Adrenal gland (tissue), 19 donors: ENCODE measurements at regions of chr14 and their contacts with region 1.

Region 1: DNA sequence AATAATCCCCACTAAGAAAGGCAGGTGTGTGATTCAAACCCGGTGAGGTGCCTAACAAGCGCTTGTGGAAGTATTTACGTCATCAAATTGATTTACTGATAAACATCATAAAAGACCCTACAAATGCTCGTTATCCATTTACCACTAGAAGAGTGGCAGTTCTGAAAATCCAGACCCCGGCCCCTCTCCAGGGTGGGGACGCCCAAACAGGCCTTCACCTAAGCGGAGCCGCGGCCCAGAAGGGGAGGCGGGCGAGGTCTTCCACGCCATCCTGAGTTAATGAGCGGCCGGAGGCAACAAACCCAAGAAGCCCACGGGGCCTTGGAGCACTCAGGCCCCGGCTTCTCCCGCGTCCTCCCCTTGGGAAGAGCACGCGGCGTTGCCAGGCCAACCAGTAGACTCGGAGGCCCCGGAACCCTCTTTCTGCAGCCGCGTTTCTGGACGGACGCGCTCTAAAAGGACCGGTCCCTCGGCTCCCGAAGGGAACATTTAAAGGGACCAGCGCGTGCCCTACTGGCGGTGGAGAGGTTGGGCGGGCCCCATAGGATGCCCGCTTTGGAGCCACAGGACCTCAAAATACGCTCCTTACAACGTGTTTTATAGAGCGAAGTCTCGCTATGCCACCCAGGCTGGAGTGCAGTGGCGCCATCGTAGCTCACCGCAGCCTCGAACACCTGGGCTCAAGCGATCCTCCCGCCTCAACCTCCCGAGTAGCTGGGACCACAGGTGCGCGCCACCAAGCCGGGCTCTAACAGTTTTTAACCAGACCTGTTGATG is 3.5 kb downstream of the PTPN21 start:
- DNase-seq: peak; percentile 83 to 92 (median 86)
- H3K4me3 ChIP-seq: peak overlapping the region; percentile 13 to 75 (median 58)
- H3K27ac ChIP-seq: peak overlapping the region in 2 of 5 donors; percentile 57 to 58
- H3K4me1 ChIP-seq: peaks cover 5 to 34% of the 10 kb centered on the region in 2 donors
- H3K27me3 ChIP-seq: no peaks in the 10 kb centered on the region
- CTCF ChIP-seq: peak in 5 of 6 experiments; percentile 31 to 54 (median 49)
- POLR2A ChIP-seq: peak; percentile 48 to 52

Region 2: DNA sequence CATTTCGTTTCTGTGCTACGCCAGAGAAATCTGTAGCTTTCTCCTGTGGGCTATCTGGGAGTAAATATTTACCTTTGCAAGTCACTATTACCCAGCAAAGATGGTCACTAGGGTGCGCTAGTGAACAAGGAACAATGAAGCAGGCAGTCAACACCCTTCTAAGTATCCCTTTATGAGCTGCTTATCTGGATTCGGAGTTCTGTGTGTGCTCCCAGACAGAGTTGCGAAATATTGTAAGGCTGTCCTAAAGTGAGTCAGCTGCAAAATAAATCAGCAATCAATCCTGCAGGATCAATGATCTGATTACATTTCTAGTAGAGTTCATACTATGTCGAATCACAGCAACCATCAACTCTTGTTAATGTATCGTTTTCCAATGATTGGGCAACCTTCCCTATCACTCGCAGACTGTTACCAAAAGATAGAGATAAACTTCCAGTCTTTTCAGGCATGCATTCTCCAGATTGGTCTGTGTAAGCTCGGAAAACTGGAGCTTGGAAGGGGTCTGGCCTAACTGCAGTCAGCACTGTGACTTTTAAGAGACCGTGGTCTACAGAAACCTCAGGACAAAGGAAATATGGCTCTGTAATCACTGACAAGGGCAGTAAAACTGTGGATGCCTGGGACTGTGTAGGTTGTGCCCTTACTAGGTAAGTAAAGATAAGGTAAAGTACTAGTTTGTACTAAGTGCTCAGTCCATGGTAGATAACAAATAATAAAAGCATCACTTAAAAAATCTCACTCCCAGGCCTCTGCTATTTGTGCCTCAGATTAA is 361.7 kb before region 1 on chr14:
- intact Hi-C with region 1: loop called in 1 of 2 experiments (anchors 10 kb)
- DNase-seq: peak; percentile 84 to 95 (median 87)
- H3K4me3 ChIP-seq: peak overlapping the region in 1 of 4 donors; percentile 8
- H3K27ac ChIP-seq: no peak overlapping the region
- H3K4me1 ChIP-seq: peaks cover 9 to 16% of the 10 kb centered on the region in 2 donors
- H3K27me3 ChIP-seq: peaks cover 13% of the 10 kb centered on the region
- CTCF ChIP-seq: peak; percentile 36 to 74 (median 68)
- POLR2A ChIP-seq: no peak

Region 3: GRCh38 chr14:88492272-88493089 is 58.8 kb before region 1 on chr14:
- intact Hi-C with region 1: loop called (anchors 5 to 10 kb)
- DNase-seq: peak; percentile 64 to 87 (median 77)
- H3K4me3 ChIP-seq: no peak overlapping the region
- H3K27ac ChIP-seq: no peak overlapping the region
- H3K4me1 ChIP-seq: no peaks in the 10 kb centered on the region
- H3K27me3 ChIP-seq: no peaks in the 10 kb centered on the region
- CTCF ChIP-seq: peak; percentile 87 to 97 (median 89)
- POLR2A ChIP-seq: no peak

Region 4: DNA sequence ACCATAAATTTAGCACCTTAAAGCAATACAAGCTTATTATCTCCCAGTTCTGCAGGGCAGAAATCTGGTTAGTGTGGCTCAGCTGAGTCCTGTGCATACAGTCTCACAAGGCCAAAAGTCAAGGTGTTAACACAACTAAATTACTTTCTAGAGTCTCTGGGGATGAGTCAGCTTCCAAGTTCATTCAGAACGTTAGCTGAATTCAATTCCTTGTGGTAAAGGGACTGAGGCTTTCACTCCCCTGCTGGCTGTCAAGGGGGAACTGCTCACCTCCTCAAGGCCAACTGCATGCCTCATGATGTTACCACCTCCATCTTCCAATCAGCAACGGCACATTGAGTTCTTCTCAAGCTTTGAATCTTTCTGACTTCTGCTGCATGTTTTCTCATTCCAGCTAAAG is 213.8 kb after region 1 on chr14:
- intact Hi-C with region 1: no loop called
- DNase-seq: no peak
- H3K4me3 ChIP-seq: no peak overlapping the region
- H3K27ac ChIP-seq: no peak overlapping the region
- H3K4me1 ChIP-seq: no peaks in the 10 kb centered on the region
- H3K27me3 ChIP-seq: no peaks in the 10 kb centered on the region
- CTCF ChIP-seq: no peak
- POLR2A ChIP-seq: no peak